H1 (cell line): ENCODE measurements at regions of chr17 and their contacts with region 1.

Region 1: DNA sequence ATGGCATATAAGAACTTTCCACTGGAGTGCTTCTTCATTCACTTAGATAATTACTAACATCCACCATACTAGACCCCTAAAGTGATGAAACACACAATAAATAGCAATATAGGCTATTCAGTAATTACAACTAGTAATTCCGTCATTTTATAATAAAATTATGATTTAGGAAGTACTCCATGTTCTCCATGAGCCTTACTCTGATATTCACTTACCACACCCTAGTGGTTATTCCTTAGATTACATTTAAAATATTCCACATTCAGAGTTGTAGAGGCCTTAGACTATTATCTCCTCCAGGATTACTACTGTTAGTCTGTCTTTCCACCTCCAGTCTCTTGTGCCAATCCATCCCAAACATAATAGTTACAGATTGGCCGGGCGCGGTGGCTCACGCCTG is 62.4 kb downstream of the STH start:
- DNase-seq: no peak
- H3K4me3 ChIP-seq: no peak overlapping the region
- H3K27ac ChIP-seq: no peak overlapping the region
- H3K4me1 ChIP-seq: peaks cover 0 to 6% (median 3%) of the 10 kb centered on the region in 4 experiments; a peak in 4 of 7 replicates
- H3K27me3 ChIP-seq: no peaks in the 10 kb centered on the region
- CTCF ChIP-seq: no peak; a peak in 1 of 4 replicates
- EP300 ChIP-seq: no peak
- POLR2A ChIP-seq: no peak
- RAD21 ChIP-seq: 0 out of 4 replicates have a peak, but pooled peaks of 1 of the 2 experiments have one; percentile 7

Region 2: DNA sequence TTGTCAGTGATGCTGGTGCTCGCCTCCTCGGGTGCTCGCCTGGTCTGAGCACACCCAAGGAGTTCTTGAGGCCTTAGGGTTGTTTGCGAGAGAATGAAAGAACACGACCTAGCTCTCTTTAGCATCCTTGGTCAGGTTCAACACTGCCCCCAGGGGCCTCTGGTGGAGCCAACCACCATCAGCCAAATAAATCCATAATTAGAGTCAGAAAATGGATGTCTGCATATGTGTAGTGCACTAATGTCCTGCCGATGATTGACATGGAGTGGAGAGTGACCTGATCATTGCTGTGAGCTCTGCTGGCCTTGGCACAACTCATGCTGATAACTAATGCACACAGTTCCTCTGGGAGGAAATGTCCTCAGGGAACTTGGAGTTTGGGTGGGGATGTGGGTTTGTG is 70.5 kb before region 1 on chr17:
- CTCF ChIA-PET with region 1: no interaction called
- POLR2A ChIA-PET with region 1: no interaction called
- DNase-seq: no peak
- H3K4me3 ChIP-seq: no peak overlapping the region
- H3K27ac ChIP-seq: no peak overlapping the region
- H3K4me1 ChIP-seq: peaks cover 0 to 9% (median 4%) of the 10 kb centered on the region in 4 experiments; a peak in 5 of 7 replicates
- H3K27me3 ChIP-seq: peaks cover 0 to 2% (median 0%) of the 10 kb centered on the region in 4 experiments; a peak in 1 of 7 replicates
- CTCF ChIP-seq: peak in 1 of 3 experiments; percentile 32; a peak in 1 of 4 replicates
- EP300 ChIP-seq: no peak
- POLR2A ChIP-seq: no peak
- RAD21 ChIP-seq: no peak

Region 3: GRCh38 chr17:46035112-46035818 is 26.2 kb before region 1 on chr17:
- CTCF ChIA-PET with region 1: interaction called, 13 read pairs
- POLR2A ChIA-PET with region 1: interaction called, 4 read pairs
- DNase-seq: no peak
- H3K4me3 ChIP-seq: no peak overlapping the region
- H3K27ac ChIP-seq: no peak overlapping the region
- H3K4me1 ChIP-seq: no peaks in the 10 kb centered on the region
- H3K27me3 ChIP-seq: no peaks in the 10 kb centered on the region
- CTCF ChIP-seq: no peak
- EP300 ChIP-seq: no peak
- POLR2A ChIP-seq: peak in 1 of 2 experiments; percentile 28; a peak in 1 of 3 replicates
- RAD21 ChIP-seq: no peak

Region 4: GRCh38 chr17:46184696-46185095 is 123.3 kb after region 1 on chr17:
- CTCF ChIA-PET with region 1: interaction called, 22 read pairs
- POLR2A ChIA-PET with region 1: no interaction called
- DNase-seq: no peak
- H3K4me3 ChIP-seq: no peak overlapping the region
- H3K27ac ChIP-seq: no peak overlapping the region
- H3K4me1 ChIP-seq: peaks cover 12 to 41% (median 28%) of the 10 kb centered on the region in 4 experiments
- H3K27me3 ChIP-seq: no peaks in the 10 kb centered on the region
- CTCF ChIP-seq: no peak
- EP300 ChIP-seq: no peak
- POLR2A ChIP-seq: no peak; a peak in 1 of 3 replicates
- RAD21 ChIP-seq: no peak